Mammary epithelial cell (primary cell): ENCODE measurements at regions of chr10 and their contacts with region 1.

Region 1: GRCh38 chr10:12048547-12048946 is 5.9 kb upstream of the UPF2 start:
- DNase-seq: no peak
- H3K4me3 ChIP-seq: no peak overlapping the region
- H3K27ac ChIP-seq: no peak overlapping the region
- H3K4me1 ChIP-seq: peaks cover 4% of the 10 kb centered on the region
- H3K27me3 ChIP-seq: no peaks in the 10 kb centered on the region
- CTCF ChIP-seq: no peak

Region 2: DNA sequence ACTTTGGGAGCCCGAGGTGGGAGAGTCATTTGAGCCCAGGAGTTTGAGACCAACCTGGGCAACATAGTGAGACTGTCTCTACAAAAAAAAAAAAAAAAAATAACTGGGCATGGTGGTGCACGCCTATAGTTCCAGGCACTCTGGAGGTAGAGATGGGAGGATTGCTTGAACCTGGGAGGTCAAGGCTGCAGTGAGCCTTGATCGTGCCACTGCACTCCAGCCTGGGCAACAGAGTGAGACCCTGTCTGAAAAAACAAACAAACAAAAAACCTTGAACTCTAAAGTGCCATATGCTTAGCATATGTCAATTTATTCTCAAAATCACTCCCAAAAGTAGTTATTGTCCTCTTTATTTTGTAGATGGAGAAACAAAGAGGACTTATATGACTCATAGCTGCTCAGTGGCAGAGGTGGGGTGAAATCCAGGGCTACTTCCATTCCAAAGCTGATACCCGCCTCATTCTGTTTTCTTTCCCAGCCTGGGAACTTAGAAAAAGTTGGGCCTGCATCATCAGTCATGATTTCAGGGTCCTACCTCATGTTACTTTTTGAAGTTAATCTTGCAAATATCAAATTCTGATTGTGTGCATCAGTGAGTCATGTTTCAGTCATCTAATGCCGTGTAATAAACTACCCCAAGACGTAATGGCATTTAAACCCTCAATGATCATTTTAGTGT is 33.5 kb after region 1 on chr10:
- CTCF ChIA-PET with region 1: interaction called, 11 read pairs
- dilution Hi-C with region 1: no loop called
- in situ Hi-C with region 1: no loop called
- intact Hi-C with region 1: no loop called
- DNase-seq: peak; percentile 17
- H3K4me3 ChIP-seq: no peak overlapping the region
- H3K27ac ChIP-seq: no peak overlapping the region
- H3K4me1 ChIP-seq: no peaks in the 10 kb centered on the region
- H3K27me3 ChIP-seq: no peaks in the 10 kb centered on the region
- CTCF ChIP-seq: no peak

Region 3: GRCh38 chr10:12235796-12236195 is 187.2 kb after region 1 on chr10:
- CTCF ChIA-PET with region 1: no interaction called
- dilution Hi-C with region 1: no loop called
- in situ Hi-C with region 1: no loop called
- intact Hi-C with region 1: no loop called
- DNase-seq: no peak
- H3K4me3 ChIP-seq: no peak overlapping the region
- H3K27ac ChIP-seq: no peak overlapping the region
- H3K4me1 ChIP-seq: no peaks in the 10 kb centered on the region
- H3K27me3 ChIP-seq: no peaks in the 10 kb centered on the region
- CTCF ChIP-seq: no peak